GM23248 (cell line): ENCODE measurements at regions of chr4 and their contacts with region 1.

Region 1: GRCh38 chr4:114386637-114387233 is 211.9 kb upstream of the UGT8 start:
- DNase-seq: peak; percentile 60
- H3K4me3 ChIP-seq: no peak overlapping the region
- H3K27ac ChIP-seq: no peak overlapping the region
- H3K4me1 ChIP-seq: peaks cover 22% of the 10 kb centered on the region
- H3K27me3 ChIP-seq: peaks cover 35% of the 10 kb centered on the region

Region 2: GRCh38 chr4:113106108-113106507 is 1280.6 kb before region 1 on chr4:
- in situ Hi-C with region 1: loop called (anchors 25 kb)
- DNase-seq: peak; percentile 77
- H3K4me3 ChIP-seq: no peak overlapping the region
- H3K27ac ChIP-seq: no peak overlapping the region
- H3K4me1 ChIP-seq: peaks cover 10% of the 10 kb centered on the region
- H3K27me3 ChIP-seq: no peaks in the 10 kb centered on the region

Region 3: DNA sequence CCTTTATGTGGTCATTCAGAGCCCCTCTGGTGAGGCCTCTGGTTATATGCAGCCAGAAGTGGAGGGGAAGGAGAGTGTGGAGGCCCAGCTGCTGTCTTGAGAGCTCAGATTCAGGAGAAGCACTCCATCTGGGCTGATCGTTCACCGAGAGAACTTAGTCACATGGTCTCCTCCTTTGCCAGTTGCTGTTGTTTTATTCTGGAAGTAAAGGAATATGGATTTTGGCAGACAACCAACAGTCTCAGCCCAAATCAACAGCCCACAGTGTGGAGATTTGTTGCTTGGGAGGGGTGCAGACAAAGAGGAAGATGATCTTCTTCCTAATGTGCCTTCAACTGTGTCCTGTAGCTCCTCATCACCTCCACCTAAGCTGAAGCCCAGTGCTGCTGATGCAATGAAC is 981.9 kb before region 1 on chr4:
- in situ Hi-C with region 1: loop called (anchors 10 kb)
- DNase-seq: no peak
- H3K4me3 ChIP-seq: no peak overlapping the region
- H3K27ac ChIP-seq: no peak overlapping the region
- H3K4me1 ChIP-seq: no peaks in the 10 kb centered on the region
- H3K27me3 ChIP-seq: no peaks in the 10 kb centered on the region

Region 4: DNA sequence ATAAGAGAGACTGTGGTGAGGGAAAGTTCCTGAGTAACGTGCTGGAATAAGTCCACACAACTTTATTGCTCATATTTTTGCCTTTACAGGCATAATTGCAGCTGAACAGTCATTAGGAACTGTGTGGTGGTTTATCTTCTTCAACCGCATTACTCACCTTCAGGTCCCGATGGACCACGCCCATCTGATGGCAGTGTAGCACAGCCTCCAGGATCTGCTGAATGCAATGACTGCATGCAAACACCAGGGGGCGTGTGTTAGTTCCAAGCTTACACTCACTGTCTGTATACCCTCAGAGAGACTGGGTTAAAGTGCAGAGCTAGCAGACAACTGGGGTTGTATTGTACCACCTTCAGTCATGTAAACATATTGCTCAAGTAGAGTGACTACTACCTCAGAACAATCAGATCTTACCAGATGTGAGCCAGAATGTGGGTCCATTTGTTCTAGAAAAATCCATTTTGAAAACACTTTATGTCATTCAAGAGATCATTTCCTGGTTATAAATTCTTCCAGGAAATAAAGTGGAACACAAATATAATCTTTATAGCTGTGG is 839.2 kb before region 1 on chr4:
- in situ Hi-C with region 1: loop called (anchors 25 kb)
- DNase-seq: peak; percentile 99
- H3K4me3 ChIP-seq: no peak overlapping the region
- H3K27ac ChIP-seq: peak overlapping the region; percentile 52
- H3K4me1 ChIP-seq: peaks cover 13% of the 10 kb centered on the region
- H3K27me3 ChIP-seq: no peaks in the 10 kb centered on the region